ENCODE measurements at regions of chr3 and their contacts with region 1.

Region 1: DNA sequence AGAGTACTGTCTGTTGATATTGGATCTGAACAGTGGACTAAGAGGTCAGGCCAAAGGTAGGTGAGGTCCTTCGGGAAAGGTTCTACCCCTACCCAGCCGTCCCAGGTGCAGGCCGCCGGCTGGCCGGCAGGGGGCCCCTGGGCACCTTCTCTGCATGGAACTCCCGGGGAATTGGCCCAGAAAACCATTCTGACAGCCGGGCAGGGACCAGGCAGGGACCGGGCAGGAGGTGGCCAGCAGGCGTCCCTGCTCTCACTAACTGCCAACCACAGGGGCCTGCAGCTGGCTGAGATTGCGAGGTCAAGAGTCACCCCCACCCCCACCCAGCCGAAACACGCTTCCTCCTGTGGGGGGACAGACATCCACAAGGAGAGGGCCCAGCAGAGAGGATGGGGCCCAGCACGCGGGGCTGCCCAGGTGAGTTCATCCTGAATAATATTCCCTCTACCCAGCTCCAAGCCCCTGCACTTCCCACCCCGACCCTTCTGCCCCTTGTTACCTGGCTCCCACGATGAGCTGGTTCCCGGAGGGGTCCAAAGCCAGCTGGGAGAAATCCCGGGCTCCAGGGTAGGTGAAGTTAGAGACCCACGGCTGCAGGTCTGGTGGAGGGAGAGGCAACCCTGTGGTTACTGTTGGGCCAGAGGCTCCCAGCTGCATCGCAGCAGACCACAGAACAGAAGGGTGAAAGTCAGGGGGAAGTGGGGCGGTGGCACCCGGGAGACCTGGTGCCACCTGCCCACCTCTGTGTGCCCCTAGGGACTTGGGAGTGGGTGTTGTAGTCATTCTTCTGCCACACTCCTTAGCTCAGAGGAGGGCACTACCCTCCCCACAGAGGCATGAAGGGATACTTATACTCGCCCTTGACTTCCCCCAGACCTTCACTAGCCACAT is 84.4 kb downstream of the SEMA5B start:
- DNase-seq: no peak
- H3K4me3 ChIP-seq: no peak overlapping the region
- CTCF ChIP-seq: peak; percentile 87

Region 2: GRCh38 chr3:121399820-121400219 is 1543.4 kb before region 1 on chr3:
- CTCF ChIA-PET with region 1: no interaction called
- POLR2A ChIA-PET with region 1: no interaction called
- DNase-seq: no peak
- H3K4me3 ChIP-seq: no peak overlapping the region
- CTCF ChIP-seq: no peak

Region 3: GRCh38 chr3:122754929-122755328 is 188.3 kb before region 1 on chr3:
- CTCF ChIA-PET with region 1: interaction called, 13 read pairs
- POLR2A ChIA-PET with region 1: no interaction called
- DNase-seq: no peak
- H3K4me3 ChIP-seq: no peak overlapping the region
- CTCF ChIP-seq: peak; percentile 62

Region 4: GRCh38 chr3:122929190-122930062 is 13.8 kb before region 1 on chr3:
- CTCF ChIA-PET with region 1: interaction called, 27 read pairs
- POLR2A ChIA-PET with region 1: no interaction called
- DNase-seq: no peak
- H3K4me3 ChIP-seq: no peak overlapping the region
- CTCF ChIP-seq: no peak

Region 5: GRCh38 chr3:123021996-123022510 is 78.9 kb after region 1 on chr3:
- CTCF ChIA-PET with region 1: interaction called, 97 read pairs
- POLR2A ChIA-PET with region 1: no interaction called
- DNase-seq: no peak
- H3K4me3 ChIP-seq: no peak overlapping the region
- CTCF ChIP-seq: no peak

Region 6: DNA sequence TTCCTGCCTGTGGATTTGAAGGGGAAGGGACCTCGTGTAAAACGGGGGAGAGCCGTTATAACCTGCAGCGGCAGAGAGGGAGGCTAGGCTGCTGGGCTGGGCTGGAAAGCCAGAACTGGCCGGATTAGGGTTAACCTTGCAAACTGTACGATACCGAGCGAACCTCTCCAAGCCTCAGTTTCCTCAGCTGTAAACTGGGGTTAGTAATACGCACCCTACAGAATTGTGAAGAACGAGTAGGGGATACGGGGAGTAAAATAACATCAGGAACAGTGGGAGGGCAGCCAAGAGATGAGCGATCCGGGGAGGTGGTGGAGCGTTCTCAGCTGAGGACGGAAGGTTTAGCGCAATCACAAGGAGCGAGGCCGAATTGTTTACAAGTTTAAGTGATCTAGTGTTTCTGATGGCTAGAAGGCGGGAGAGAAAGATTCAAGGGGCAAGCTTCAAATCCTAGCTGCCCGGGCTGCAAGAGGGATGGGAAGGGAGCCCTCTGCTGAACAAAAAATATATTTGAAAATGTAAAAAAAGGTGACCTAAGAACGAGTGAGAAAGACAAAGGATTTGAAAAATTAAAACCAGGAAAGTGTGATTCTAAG is 85.1 kb after region 1 on chr3:
- CTCF ChIA-PET with region 1: interaction called, 97 read pairs
- POLR2A ChIA-PET with region 1: no interaction called
- DNase-seq: peak; percentile 28
- H3K4me3 ChIP-seq: peak overlapping the region; percentile 45
- CTCF ChIP-seq: peak; percentile 31